A549 (cell line): ENCODE measurements at regions of chr2 and their contacts with region 1.

Region 1: DNA sequence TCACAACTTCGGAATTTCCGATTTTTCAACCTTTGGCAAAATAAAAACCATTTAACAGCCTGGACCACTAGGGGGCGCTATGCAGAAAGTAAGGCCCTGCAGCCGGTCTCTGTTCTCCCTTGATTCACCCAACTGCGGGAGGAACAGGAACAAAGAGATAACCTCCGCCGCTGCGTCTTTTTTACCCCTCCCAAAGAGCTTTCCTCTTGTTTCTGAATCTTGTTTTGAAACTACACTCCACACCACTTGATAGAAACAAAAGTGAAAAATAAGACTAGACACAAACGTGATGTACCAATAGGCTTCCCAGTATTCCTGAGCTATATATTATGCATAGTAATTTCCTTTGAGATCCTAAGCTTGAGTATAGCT is 231.2 kb downstream of the MYO3B start:
- DNase-seq: peak in 1 of 2 experiments; percentile 61
- ATAC-seq: peak; percentile 47 to 74; a peak in 3 of 6 replicates
- H3K4me3 ChIP-seq: no peak overlapping the region; the same call in 2 of the 3 replicates
- H3K27ac ChIP-seq: no peak overlapping the region
- H3K4me1 ChIP-seq: no peaks in the 10 kb centered on the region
- CTCF ChIP-seq: peak; percentile 79
- EP300 ChIP-seq: no peak
- POLR2A ChIP-seq: no peak
- RAD21 ChIP-seq: peak; percentile 50 to 58

Region 2: GRCh38 chr2:170369894-170370293 is 39.3 kb before region 1 on chr2:
- CTCF ChIA-PET with region 1: interaction called, 13 read pairs
- POLR2A ChIA-PET with region 1: no interaction called
- DNase-seq: peak; percentile 2 to 30
- ATAC-seq: peak in 1 of 2 experiments; percentile 51; a peak in 1 of 6 replicates
- H3K4me3 ChIP-seq: no peak overlapping the region
- H3K27ac ChIP-seq: no peak overlapping the region
- H3K4me1 ChIP-seq: no peaks in the 10 kb centered on the region
- CTCF ChIP-seq: peak; percentile 55
- EP300 ChIP-seq: no peak
- POLR2A ChIP-seq: no peak
- RAD21 ChIP-seq: peak; percentile 42 to 62; a peak in 4 of 5 replicates

Region 3: GRCh38 chr2:170396799-170397459 is 12.2 kb before region 1 on chr2:
- CTCF ChIA-PET with region 1: interaction called, 17 read pairs
- POLR2A ChIA-PET with region 1: no interaction called
- DNase-seq: peak in 1 of 2 experiments; percentile 19
- ATAC-seq: peak; percentile 66 to 71; a peak in 5 of 6 replicates
- H3K4me3 ChIP-seq: no peak overlapping the region
- H3K27ac ChIP-seq: no peak overlapping the region
- H3K4me1 ChIP-seq: no peaks in the 10 kb centered on the region
- CTCF ChIP-seq: peak; percentile 53
- EP300 ChIP-seq: no peak
- POLR2A ChIP-seq: no peak
- RAD21 ChIP-seq: peak; percentile 44 to 53; a peak in 3 of 5 replicates

Region 4: DNA sequence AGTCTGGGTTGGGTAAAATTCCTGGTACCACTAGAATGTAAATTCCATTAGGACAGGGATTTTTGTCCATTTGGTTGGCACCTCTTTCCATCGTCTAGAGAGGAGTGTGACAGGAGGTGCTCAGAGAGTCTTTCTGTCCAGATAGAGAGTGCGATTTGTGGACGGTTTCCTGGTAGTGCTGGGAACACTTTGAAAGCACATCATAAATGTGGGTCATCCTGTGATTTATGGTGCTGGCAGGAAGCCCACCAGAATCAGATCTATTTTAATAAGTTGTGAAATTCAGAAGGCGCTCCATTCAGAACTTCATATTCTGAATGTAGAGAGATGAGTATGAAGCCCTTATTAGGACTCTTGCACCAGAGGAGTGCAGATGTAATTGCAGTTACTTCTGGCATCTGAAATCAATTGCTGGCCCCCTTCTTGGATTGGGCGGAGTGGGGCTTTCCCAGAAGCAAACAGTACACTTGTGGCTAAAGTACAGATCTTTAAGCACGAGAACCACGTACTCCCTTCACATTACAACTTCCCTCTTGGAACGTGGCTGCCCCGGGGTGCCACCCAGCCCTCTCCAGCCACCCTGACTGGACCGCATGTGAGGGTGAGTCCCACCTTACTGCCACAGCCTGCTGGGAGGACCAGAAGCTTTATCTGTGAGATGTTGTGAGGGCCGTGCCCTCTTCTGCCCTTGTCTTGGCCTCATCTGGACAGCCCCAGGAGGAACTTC is 12.0 kb after region 1 on chr2:
- CTCF ChIA-PET with region 1: interaction called, 23 read pairs
- POLR2A ChIA-PET with region 1: no interaction called
- DNase-seq: no peak
- ATAC-seq: no peak
- H3K4me3 ChIP-seq: no peak overlapping the region
- H3K27ac ChIP-seq: no peak overlapping the region
- H3K4me1 ChIP-seq: no peaks in the 10 kb centered on the region
- CTCF ChIP-seq: no peak
- EP300 ChIP-seq: no peak
- POLR2A ChIP-seq: no peak
- RAD21 ChIP-seq: no peak

Region 5: GRCh38 chr2:170806548-170806947 is 397.4 kb after region 1 on chr2:
- CTCF ChIA-PET with region 1: interaction called, 64 read pairs
- POLR2A ChIA-PET with region 1: no interaction called
- DNase-seq: no peak
- ATAC-seq: no peak
- H3K4me3 ChIP-seq: no peak overlapping the region
- H3K27ac ChIP-seq: no peak overlapping the region
- H3K4me1 ChIP-seq: no peaks in the 10 kb centered on the region
- CTCF ChIP-seq: no peak
- EP300 ChIP-seq: no peak
- POLR2A ChIP-seq: no peak
- RAD21 ChIP-seq: no peak

Region 6: DNA sequence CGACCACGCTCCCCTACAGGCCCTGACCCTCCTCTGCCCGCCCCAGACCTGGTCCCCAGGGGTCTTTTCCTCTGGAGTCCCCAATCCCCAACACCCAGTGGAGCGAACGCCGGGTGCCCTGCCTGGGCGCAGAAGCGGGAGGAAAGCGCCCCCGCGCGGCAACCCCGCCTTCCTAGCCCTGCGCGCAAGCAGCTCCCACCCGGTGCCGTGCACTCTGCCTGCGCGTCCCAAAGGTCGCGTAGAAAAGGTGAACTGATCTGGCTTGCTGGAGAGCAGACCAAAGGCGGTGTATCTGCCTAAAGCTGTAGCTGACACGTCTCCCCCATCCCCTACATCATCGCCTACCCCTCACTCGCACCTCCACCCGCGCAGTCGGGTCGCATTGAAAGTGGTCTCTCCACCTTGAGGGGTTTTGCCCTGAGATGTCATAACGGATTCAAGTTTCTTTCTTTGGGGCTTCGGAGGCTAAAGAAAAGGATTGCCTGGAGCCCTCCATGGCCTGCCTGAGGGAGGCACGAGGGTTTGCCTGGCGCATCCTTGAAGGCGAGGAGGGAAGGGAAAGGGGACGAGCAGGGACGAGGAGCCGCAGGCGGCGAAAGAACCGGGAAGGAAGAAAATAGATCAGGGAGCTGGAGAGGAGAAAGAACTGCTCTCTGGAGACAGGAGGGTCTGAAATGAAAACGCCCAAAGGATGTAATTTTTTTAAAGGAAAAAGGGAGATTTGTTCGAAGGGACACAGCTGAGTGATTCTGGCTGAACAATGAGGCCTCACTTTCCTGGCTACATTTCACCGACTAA is 413.3 kb after region 1 on chr2:
- CTCF ChIA-PET with region 1: interaction called, 64 read pairs
- POLR2A ChIA-PET with region 1: no interaction called
- DNase-seq: peak in 1 of 2 experiments; percentile 37
- ATAC-seq: peak in 1 of 2 experiments; percentile 71; a peak in 3 of 6 replicates
- H3K4me3 ChIP-seq: peak overlapping the region; percentile 37
- H3K27ac ChIP-seq: no peak overlapping the region
- H3K4me1 ChIP-seq: peaks cover 36% of the 10 kb centered on the region
- CTCF ChIP-seq: peak; percentile 43
- EP300 ChIP-seq: no peak
- POLR2A ChIP-seq: no peak
- RAD21 ChIP-seq: peak in 1 of 2 experiments; percentile 31; a peak in 3 of 5 replicates